ENCODE measurements at regions of chr1 and their contacts with region 1.

Region 1: DNA sequence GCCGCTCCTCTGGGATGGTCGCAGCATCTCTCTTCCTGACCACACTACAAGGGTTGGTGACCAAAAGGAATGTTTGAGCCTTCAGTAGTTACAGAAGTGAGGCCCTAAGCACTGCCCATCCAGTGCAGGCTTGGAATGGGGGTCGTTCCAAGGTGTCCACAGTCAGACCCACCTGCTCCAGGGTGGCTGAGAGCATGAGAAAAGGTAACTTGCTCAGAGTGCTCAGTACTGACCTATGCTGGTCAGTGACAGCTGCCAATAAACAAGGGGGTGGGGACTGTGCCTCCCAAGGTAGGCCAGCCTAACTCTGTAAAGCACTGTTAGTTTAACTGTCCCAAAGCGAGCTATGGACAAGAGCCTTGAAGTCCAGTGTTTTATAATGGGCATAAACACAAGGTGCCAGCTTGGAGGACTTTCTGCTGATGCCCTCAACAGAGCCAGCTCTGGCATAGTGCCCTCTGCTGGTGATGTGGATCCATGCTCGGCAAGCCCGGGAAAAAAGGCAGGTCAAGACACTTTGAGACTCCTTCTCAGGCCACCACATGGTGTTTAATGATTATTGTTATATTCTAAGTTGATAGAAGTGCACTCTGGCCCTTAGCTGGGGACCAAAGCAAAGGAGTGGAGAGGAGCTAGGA is 78.1 kb upstream of the DNAH14 start:
- DNase-seq: peak; percentile 69
- H3K4me3 Mint-ChIP-seq: no peak overlapping the region
- H3K27ac Mint-ChIP-seq: no peak overlapping the region
- H3K4me1 Mint-ChIP-seq: no peaks in the 10 kb centered on the region
- H3K27me3 Mint-ChIP-seq: peaks cover 7% of the 10 kb centered on the region

Region 2: GRCh38 chr1:224329842-224330753 is 521.2 kb before region 1 on chr1 and contains the start of gene NVL:
- CTCF ChIA-PET with region 1: no interaction called
- POLR2A ChIA-PET with region 1: no interaction called
- intact Hi-C with region 1: no loop called
- DNase-seq: peak; percentile 88
- H3K4me3 Mint-ChIP-seq: peak within 1 kb of the TSS; percentile 94
- H3K27ac Mint-ChIP-seq: peak within 1 kb of the TSS; percentile 97
- H3K4me1 Mint-ChIP-seq: peaks cover 42% of the 10 kb centered on the region
- H3K27me3 Mint-ChIP-seq: no peaks in the 10 kb centered on the region
- total RNA-seq, gene NVL: 32.5 to 38.0 TPM

Region 3: GRCh38 chr1:224534731-224535130 is 316.6 kb before region 1 on chr1:
- CTCF ChIA-PET with region 1: no interaction called
- POLR2A ChIA-PET with region 1: no interaction called
- intact Hi-C with region 1: no loop called
- DNase-seq: no peak
- H3K4me3 Mint-ChIP-seq: no peak overlapping the region
- H3K27ac Mint-ChIP-seq: no peak overlapping the region
- H3K4me1 Mint-ChIP-seq: no peaks in the 10 kb centered on the region
- H3K27me3 Mint-ChIP-seq: peaks cover 2% of the 10 kb centered on the region

Region 4: GRCh38 chr1:224644553-224645154 is 206.7 kb before region 1 on chr1:
- CTCF ChIA-PET with region 1: interaction called, 17 read pairs
- POLR2A ChIA-PET with region 1: no interaction called
- intact Hi-C with region 1: loop called (anchors 1 kb)
- DNase-seq: peak; percentile 66
- H3K4me3 Mint-ChIP-seq: no peak overlapping the region
- H3K27ac Mint-ChIP-seq: no peak overlapping the region
- H3K4me1 Mint-ChIP-seq: no peaks in the 10 kb centered on the region
- H3K27me3 Mint-ChIP-seq: no peaks in the 10 kb centered on the region

Region 5: GRCh38 chr1:224700915-224701531 is 150.3 kb before region 1 on chr1:
- CTCF ChIA-PET with region 1: interaction called, 11 read pairs
- POLR2A ChIA-PET with region 1: no interaction called
- intact Hi-C with region 1: loop called (anchors 5 kb)
- DNase-seq: no peak
- H3K4me3 Mint-ChIP-seq: no peak overlapping the region
- H3K27ac Mint-ChIP-seq: no peak overlapping the region
- H3K4me1 Mint-ChIP-seq: no peaks in the 10 kb centered on the region
- H3K27me3 Mint-ChIP-seq: no peaks in the 10 kb centered on the region

Region 6: GRCh38 chr1:224922404-224923164 is 71.3 kb after region 1 on chr1:
- CTCF ChIA-PET with region 1: interaction called, 10 read pairs
- POLR2A ChIA-PET with region 1: no interaction called
- intact Hi-C with region 1: no loop called
- DNase-seq: no peak
- H3K4me3 Mint-ChIP-seq: no peak overlapping the region
- H3K27ac Mint-ChIP-seq: no peak overlapping the region
- H3K4me1 Mint-ChIP-seq: no peaks in the 10 kb centered on the region
- H3K27me3 Mint-ChIP-seq: peaks cover 9% of the 10 kb centered on the region